Activated CD4-positive, alpha-beta memory T cell treated with anti-CD3 and anti-CD28 coated beads for 36 hours (primary cell): ENCODE measurements at regions of chr5 and their contacts with region 1.

Region 1: DNA sequence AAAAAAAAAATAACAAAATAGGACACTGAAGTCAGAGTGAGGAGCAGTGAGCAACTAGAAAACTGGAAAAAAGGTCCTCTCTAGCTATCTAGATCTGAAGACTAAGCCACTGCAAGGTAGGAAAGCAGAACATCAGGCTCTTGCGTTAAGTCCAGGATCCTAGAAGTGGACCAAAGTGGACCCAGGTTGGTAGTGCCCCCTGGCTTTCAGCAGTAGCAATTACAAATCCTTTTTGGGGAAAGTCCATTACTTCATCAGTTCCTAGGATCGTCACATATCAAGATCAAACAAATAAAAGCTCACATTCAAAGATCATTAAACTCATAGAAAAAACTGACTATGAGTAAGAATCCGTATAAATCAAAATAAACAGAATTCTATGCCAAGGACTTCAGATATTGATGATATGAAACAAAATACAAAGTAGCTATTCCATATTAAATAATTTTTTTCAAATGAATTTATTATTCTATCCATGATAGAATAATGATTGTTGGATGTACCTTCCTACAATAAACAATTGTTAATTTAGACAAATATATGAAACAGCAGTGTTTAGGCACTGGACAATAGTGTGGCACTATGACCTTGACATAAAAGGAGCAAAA is 6.5 kb upstream of the RICTOR start:
- DNase-seq: peak; percentile 55
- H3K4me3 Mint-ChIP-seq: no peak overlapping the region
- H3K27ac Mint-ChIP-seq: no peak overlapping the region
- H3K4me1 Mint-ChIP-seq: peaks cover 19% of the 10 kb centered on the region
- H3K27me3 Mint-ChIP-seq: peaks cover 31% of the 10 kb centered on the region

Region 2: DNA sequence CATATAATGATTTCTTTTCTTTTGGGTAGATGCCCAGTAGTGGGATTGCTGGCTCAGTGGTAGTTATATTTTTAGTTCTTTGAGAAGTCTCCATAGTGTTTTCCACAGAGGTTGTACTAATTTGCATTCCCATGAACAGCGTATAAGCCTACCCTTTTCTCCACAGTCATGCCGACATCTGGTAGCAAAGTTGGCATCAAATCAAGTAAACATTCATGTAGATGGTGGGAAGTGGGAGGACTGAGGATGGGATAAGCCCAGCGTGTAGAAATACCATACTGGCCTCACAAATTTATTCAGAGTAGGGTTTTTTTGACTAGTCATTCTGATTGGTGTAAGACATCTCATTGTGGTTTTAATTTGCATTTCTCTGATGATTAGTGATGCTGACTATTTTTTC is 707.0 kb before region 1 on chr5:
- CTCF ChIA-PET with region 1: no interaction called
- POLR2A ChIA-PET with region 1: no interaction called
- intact Hi-C with region 1: no loop called
- DNase-seq: no peak
- H3K4me3 Mint-ChIP-seq: no peak overlapping the region
- H3K27ac Mint-ChIP-seq: no peak overlapping the region
- H3K4me1 Mint-ChIP-seq: peaks cover 6% of the 10 kb centered on the region
- H3K27me3 Mint-ChIP-seq: peaks cover 12% of the 10 kb centered on the region

Region 3: GRCh38 chr5:38831909-38832308 is 248.8 kb before region 1 on chr5:
- CTCF ChIA-PET with region 1: interaction called, 3 read pairs
- POLR2A ChIA-PET with region 1: no interaction called
- intact Hi-C with region 1: loop called (anchors 1 kb)
- DNase-seq: no peak
- H3K4me3 Mint-ChIP-seq: no peak overlapping the region
- H3K27ac Mint-ChIP-seq: no peak overlapping the region
- H3K4me1 Mint-ChIP-seq: no peaks in the 10 kb centered on the region
- H3K27me3 Mint-ChIP-seq: peaks cover 13% of the 10 kb centered on the region

Region 4: GRCh38 chr5:38994324-38994927 is 86.3 kb before region 1 on chr5:
- CTCF ChIA-PET with region 1: interaction called, 7 read pairs
- POLR2A ChIA-PET with region 1: no interaction called
- intact Hi-C with region 1: loop called (anchors 1 kb)
- DNase-seq: peak; percentile 28
- H3K4me3 Mint-ChIP-seq: no peak overlapping the region
- H3K27ac Mint-ChIP-seq: no peak overlapping the region
- H3K4me1 Mint-ChIP-seq: peaks cover 10% of the 10 kb centered on the region
- H3K27me3 Mint-ChIP-seq: no peaks in the 10 kb centered on the region

Region 5: GRCh38 chr5:39058178-39058921 is 22.4 kb before region 1 on chr5:
- CTCF ChIA-PET with region 1: interaction called, 12 read pairs
- POLR2A ChIA-PET with region 1: no interaction called
- intact Hi-C with region 1: no loop called
- DNase-seq: no peak
- H3K4me3 Mint-ChIP-seq: no peak overlapping the region
- H3K27ac Mint-ChIP-seq: no peak overlapping the region
- H3K4me1 Mint-ChIP-seq: peaks cover 64% of the 10 kb centered on the region
- H3K27me3 Mint-ChIP-seq: no peaks in the 10 kb centered on the region

Region 6: DNA sequence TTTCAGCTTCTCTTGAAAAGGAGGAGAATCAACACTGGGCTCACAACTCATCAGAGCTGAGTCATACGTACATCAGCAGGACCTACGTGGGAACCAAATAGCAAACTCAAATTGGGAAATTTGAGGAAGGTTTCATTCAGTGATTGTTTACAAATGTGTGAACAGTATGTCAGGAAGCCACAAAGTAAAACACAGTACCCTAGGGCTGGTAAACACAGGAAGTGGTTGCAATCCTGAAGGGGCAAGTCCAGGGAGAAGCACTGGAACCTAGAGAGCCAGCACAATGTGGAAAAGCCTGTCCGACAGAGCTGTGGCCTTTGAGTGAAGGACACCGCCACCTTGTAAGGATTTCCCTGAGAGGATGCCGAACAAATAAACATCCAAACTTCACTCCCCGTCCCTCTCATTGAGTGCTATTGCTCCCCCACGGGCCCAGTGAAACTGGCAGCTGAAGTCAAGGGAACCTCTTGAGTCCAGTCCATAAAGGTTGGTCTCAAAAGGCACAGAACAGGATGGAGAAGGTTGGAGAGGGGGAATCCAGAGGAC is 20.2 kb after region 1 on chr5:
- CTCF ChIA-PET with region 1: interaction called, 19 read pairs
- POLR2A ChIA-PET with region 1: no interaction called
- intact Hi-C with region 1: no loop called
- DNase-seq: no peak
- H3K4me3 Mint-ChIP-seq: no peak overlapping the region
- H3K27ac Mint-ChIP-seq: peak overlapping the region; percentile 82
- H3K4me1 Mint-ChIP-seq: peaks cover 27% of the 10 kb centered on the region
- H3K27me3 Mint-ChIP-seq: no peaks in the 10 kb centered on the region

Region 7: DNA sequence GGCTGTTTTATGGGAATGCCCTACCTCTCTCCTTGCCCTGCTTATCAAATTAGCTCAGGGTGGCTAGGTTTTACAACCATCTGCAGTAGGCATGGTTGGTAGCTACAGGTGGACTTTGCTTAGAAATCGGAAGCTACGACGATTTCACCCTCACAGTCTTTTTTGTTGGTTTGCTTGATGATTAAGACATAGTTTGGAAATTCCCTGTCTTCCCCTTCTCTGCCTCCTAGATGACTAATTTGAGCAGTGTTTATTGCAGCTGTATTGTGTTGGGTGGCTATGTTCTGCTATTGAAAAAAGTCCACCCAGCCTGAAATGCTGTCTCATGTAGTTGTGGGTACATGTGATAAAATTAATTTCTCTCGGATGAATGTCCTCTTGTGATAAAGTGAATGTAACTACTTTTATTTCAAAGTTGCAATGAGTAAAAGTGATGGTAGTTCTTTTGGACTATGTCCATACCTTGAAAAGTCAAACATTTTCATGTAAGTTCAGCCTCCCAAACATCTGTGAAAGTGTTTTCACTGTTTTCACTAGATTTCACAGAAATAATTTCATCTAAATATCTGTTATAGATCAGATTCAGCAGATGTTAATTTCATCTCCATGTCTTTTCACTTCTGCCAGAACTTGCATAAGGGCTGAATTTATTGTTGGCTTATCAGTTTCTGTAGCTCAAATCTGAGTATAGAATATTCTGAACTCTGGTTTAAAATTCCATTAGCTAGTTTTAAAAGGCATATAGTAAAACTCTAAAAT is 176.0 kb after region 1 on chr5:
- CTCF ChIA-PET with region 1: no interaction called
- POLR2A ChIA-PET with region 1: no interaction called
- intact Hi-C with region 1: no loop called
- DNase-seq: no peak
- H3K4me3 Mint-ChIP-seq: peak overlapping the region; percentile 2
- H3K27ac Mint-ChIP-seq: peak overlapping the region; percentile 21
- H3K4me1 Mint-ChIP-seq: peaks cover 15% of the 10 kb centered on the region
- H3K27me3 Mint-ChIP-seq: no peaks in the 10 kb centered on the region

Region 8: GRCh38 chr5:39599721-39600431 is 519.2 kb after region 1 on chr5:
- CTCF ChIA-PET with region 1: no interaction called
- POLR2A ChIA-PET with region 1: no interaction called
- intact Hi-C with region 1: no loop called
- DNase-seq: no peak
- H3K4me3 Mint-ChIP-seq: no peak overlapping the region
- H3K27ac Mint-ChIP-seq: no peak overlapping the region
- H3K4me1 Mint-ChIP-seq: no peaks in the 10 kb centered on the region
- H3K27me3 Mint-ChIP-seq: peaks cover 6% of the 10 kb centered on the region